Activated CD4-positive, alpha-beta T cell treated with anti-CD3 and anti-CD28 coated beads for 36 hours (primary cell): ENCODE measurements at regions of chr1 and their contacts with region 1.

Region 1: GRCh38 chr1:224182866-224183590 is at the start of gene DEGS1:
- DNase-seq: peak; percentile 91
- ATAC-seq: peak; percentile 77
- H3K4me3 Mint-ChIP-seq: peak within 1 kb of the TSS; percentile 82
- H3K27ac Mint-ChIP-seq: peak within 1 kb of the TSS; percentile 95
- H3K4me1 Mint-ChIP-seq: peaks cover 45% of the 10 kb centered on the region
- H3K27me3 Mint-ChIP-seq: peaks cover 5% of the 10 kb centered on the region
- total RNA-seq, gene DEGS1: 24.0 to 24.5 TPM

Region 2: GRCh38 chr1:223378754-223379153 is 804.3 kb before region 1 on chr1:
- CTCF ChIA-PET with region 1: no interaction called
- POLR2A ChIA-PET with region 1: no interaction called
- intact Hi-C with region 1: no loop called
- DNase-seq: no peak
- ATAC-seq: no peak
- H3K4me3 Mint-ChIP-seq: no peak overlapping the region
- H3K27ac Mint-ChIP-seq: no peak overlapping the region
- H3K4me1 Mint-ChIP-seq: no peaks in the 10 kb centered on the region
- H3K27me3 Mint-ChIP-seq: no peaks in the 10 kb centered on the region

Region 3: DNA sequence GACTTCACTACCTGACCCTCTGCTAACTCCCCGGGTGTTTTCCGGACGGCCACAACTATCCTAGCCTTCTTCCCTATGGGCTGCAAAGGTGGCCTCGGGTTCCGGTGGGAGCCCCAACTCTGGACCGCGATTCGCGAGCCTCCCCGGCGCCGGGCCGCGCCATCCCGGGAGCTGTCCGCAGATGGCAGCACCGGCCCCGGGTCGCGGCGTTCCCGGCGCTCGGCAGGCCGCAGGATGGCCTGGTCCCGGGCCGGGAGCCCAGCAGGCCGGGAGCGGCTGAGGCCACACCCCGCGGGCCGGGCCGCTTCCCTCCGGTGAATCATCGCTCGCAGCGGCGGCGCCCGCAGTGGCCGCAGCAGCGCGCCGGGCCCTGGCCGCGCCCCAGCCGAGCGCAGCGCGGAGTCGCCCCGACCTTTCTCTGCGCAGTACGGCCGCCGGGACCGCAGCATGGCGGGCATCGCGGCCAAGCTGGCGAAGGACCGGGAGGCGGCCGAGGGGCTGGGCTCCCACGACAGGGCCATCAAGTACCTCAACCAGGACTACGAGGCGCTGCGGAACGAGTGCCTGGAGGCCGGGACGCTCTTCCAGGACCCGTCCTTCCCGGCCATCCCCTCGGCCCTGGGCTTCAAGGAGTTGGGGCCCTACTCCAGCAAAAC is 470.7 kb before region 1 on chr1 and contains the start of gene CAPN2:
- CTCF ChIA-PET with region 1: no interaction called
- POLR2A ChIA-PET with region 1: no interaction called
- intact Hi-C with region 1: loop called in 1 of 2 experiments (anchors 5 kb)
- DNase-seq: peak; percentile 76
- ATAC-seq: peak; percentile 47
- H3K4me3 Mint-ChIP-seq: peak within 1 kb of the TSS; percentile 80
- H3K27ac Mint-ChIP-seq: peak within 1 kb of the TSS; percentile 82
- H3K4me1 Mint-ChIP-seq: peaks cover 62% of the 10 kb centered on the region
- H3K27me3 Mint-ChIP-seq: no peaks in the 10 kb centered on the region
- total RNA-seq, gene CAPN2: 31.1 to 33.1 TPM

Region 4: GRCh38 chr1:224113918-224114786 is 68.9 kb before region 1 on chr1 and contains the start of gene FBXO28:
- CTCF ChIA-PET with region 1: interaction called, 4 read pairs
- POLR2A ChIA-PET with region 1: interaction called, 3 read pairs
- intact Hi-C with region 1: loop called (anchors 1 to 5 kb)
- DNase-seq: peak; percentile 98
- ATAC-seq: peak; percentile 99
- H3K4me3 Mint-ChIP-seq: peak within 1 kb of the TSS; percentile 85
- H3K27ac Mint-ChIP-seq: peak within 1 kb of the TSS; percentile 96
- H3K4me1 Mint-ChIP-seq: peaks cover 25% of the 10 kb centered on the region
- H3K27me3 Mint-ChIP-seq: no peaks in the 10 kb centered on the region
- total RNA-seq, gene FBXO28: 17.1 to 19.7 TPM

Region 5: DNA sequence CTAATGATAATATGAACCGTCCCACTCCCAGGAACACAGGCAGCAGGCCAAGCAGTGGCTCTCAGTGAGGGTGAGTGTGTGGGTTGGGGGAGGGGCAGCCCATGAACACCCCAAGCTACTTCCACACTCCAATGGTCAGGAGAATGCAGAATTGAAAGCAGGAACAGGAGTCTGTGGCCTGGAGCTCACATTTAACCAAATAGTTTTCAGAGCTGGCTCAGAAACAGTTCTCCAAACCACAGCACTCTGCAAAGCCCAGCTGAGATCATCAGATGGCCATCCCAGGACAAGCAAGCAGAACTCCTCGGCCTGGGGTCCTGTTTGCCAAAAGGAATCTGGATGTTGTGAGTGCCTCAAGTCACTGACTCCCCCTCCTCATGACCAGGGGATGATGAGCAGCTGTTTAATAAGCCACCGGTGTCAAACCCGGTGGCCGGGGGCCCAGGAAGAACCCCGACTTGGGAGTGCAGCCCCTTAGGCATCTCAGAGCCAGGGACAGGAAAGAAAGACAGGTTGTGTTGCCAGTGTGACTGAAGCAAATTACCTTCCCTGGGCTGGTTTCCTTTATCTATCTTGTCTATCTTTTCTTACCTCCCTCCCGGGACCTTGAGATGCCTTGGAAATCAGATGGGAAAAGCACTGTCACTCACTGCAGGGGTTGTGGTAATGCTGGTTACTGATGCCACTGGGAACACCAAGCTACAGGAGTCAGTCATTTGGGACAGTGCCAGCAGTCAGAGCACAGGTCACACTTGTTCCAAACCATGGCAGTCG is 20.4 kb after region 1 on chr1:
- CTCF ChIA-PET with region 1: interaction called, 3 read pairs
- POLR2A ChIA-PET with region 1: interaction called, 8 read pairs
- intact Hi-C with region 1: loop called in 1 of 2 experiments (anchors 1 kb)
- DNase-seq: no peak
- ATAC-seq: no peak
- H3K4me3 Mint-ChIP-seq: no peak overlapping the region
- H3K27ac Mint-ChIP-seq: no peak overlapping the region
- H3K4me1 Mint-ChIP-seq: peaks cover 13% of the 10 kb centered on the region
- H3K27me3 Mint-ChIP-seq: no peaks in the 10 kb centered on the region

Region 6: DNA sequence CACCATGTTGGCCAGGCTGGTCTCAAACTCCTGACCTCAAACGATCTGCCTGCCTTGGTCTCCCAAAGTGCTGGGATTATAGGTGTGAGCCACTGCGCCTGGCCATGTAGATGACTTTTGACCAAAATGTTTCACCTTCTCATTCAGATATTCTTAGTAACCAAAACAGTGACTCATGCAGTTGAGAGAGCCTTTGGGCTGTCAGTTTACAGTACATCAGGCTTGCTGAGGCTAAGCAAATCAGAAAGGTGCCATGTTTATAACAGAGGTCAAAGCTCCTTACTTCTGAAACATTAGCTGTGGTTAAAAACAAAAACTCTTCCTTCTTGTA is 194.6 kb after region 1 on chr1:
- CTCF ChIA-PET with region 1: no interaction called
- POLR2A ChIA-PET with region 1: no interaction called
- intact Hi-C with region 1: loop called (anchors 5 kb)
- DNase-seq: peak; percentile 56
- ATAC-seq: peak; percentile 68
- H3K4me3 Mint-ChIP-seq: no peak overlapping the region
- H3K27ac Mint-ChIP-seq: peak overlapping the region; percentile 82
- H3K4me1 Mint-ChIP-seq: peaks cover 94% of the 10 kb centered on the region
- H3K27me3 Mint-ChIP-seq: no peaks in the 10 kb centered on the region

Region 7: GRCh38 chr1:225441314-225442122 is 1258.5 kb after region 1 on chr1:
- CTCF ChIA-PET with region 1: no interaction called
- POLR2A ChIA-PET with region 1: interaction called, 3 read pairs
- intact Hi-C with region 1: loop called in 1 of 2 experiments (anchors 10 kb)
- DNase-seq: no peak
- ATAC-seq: no peak
- H3K4me3 Mint-ChIP-seq: no peak overlapping the region
- H3K27ac Mint-ChIP-seq: peak overlapping the region; percentile 82
- H3K4me1 Mint-ChIP-seq: peaks cover 49% of the 10 kb centered on the region
- H3K27me3 Mint-ChIP-seq: no peaks in the 10 kb centered on the region